Psoas muscle (tissue), 8 donors: ENCODE measurements at regions of chr14 and their contacts with region 1.

Region 1: GRCh38 chr14:20397511-20397910 is 15.8 kb downstream of the TEP1 start:
- DNase-seq: no peak
- ATAC-seq: no peak
- H3K4me3 ChIP-seq: no peak overlapping the region
- H3K27ac ChIP-seq: no peak overlapping the region
- H3K4me1 ChIP-seq: no peaks in the 10 kb centered on the region
- H3K27me3 ChIP-seq: no peaks in the 10 kb centered on the region
- CTCF ChIP-seq: no peak

Region 2: DNA sequence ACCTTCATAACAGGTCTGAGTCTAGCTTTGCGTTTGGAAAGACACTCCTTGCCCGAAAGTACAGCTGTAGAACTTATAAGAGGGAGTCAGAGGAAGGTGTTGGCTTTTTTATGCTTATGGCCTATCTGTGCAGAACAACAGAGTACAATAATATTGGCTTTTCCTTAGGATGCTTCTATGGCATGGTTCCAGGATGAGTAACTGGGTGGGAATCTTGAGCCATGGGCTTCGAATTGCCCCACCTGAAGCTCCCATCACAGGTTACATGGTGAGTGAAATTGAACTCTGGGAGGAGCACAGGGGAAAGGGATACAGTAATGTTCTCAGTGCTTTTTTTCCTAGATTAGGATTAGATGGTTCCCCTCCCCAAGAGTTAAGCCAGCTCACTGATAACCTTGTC is 41.1 kb before region 1 on chr14:
- intact Hi-C with region 1: loop called (anchors 5 kb)
- DNase-seq: no peak
- ATAC-seq: peak in 1 of 4 donors; percentile 23
- H3K4me3 ChIP-seq: no peak overlapping the region
- H3K27ac ChIP-seq: no peak overlapping the region
- H3K4me1 ChIP-seq: no peaks in the 10 kb centered on the region
- H3K27me3 ChIP-seq: no peaks in the 10 kb centered on the region
- CTCF ChIP-seq: no peak

Region 3: DNA sequence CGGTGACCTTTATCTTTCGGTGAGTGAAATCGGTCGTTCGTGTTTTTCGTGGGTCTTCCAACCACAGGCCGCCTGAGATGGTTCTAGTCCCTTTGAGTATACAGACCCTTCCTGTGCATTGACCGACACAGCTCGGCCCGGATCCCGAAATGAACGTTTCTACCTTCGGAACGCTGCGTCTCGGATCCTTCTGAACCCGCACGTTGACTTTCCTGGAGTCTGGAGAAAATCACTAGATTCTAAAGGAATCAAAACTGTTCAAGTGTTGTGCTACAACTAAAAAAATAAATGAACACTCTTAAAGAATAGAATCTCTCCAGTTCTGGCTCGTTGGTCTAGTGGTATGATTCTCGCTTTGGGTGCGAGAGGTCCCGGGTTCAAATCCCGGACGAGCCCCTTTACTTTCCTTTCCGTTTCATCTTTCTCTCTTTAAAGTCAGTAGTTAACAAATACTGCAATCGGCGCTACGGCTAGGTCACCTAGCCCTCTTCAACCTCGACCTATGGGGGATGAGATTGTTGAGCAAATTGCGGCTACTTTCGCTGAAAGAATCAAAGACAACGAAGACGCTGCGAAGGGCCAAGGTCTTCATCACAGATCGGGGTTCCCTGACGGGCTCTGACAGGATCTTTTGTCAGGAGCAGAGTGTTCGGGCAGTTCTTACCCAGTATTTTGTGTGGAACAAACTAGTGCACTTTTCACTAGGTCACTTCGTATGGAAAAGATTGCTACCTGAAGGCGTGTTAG is 235.3 kb after region 1 on chr14:
- intact Hi-C with region 1: no loop called
- DNase-seq: no peak
- ATAC-seq: peak; percentile 40 to 60 (median 60)
- H3K4me3 ChIP-seq: peak overlapping the region; percentile 49
- H3K27ac ChIP-seq: no peak overlapping the region
- H3K4me1 ChIP-seq: peaks cover 12% of the 10 kb centered on the region
- H3K27me3 ChIP-seq: peaks cover 0 to 83% (median 16%) of the 10 kb centered on the region in 3 donors
- CTCF ChIP-seq: no peak